Activated T-helper 1 cell treated with anti-CD3 and anti-CD28 coated beads, Interleukin-12 subunit alpha, Interleukin-12 subunit beta, Interleukin-2, Interleukin-4 antibody, amounts not matched to agents 30 ng/mL and 10 ng/mL and 1 ng/mL, durations not matched to agents 14 hours and 24 hours and 36 hours (primary cell): ENCODE measurements at regions of chr14 and their contacts with region 1.

Region 1: DNA sequence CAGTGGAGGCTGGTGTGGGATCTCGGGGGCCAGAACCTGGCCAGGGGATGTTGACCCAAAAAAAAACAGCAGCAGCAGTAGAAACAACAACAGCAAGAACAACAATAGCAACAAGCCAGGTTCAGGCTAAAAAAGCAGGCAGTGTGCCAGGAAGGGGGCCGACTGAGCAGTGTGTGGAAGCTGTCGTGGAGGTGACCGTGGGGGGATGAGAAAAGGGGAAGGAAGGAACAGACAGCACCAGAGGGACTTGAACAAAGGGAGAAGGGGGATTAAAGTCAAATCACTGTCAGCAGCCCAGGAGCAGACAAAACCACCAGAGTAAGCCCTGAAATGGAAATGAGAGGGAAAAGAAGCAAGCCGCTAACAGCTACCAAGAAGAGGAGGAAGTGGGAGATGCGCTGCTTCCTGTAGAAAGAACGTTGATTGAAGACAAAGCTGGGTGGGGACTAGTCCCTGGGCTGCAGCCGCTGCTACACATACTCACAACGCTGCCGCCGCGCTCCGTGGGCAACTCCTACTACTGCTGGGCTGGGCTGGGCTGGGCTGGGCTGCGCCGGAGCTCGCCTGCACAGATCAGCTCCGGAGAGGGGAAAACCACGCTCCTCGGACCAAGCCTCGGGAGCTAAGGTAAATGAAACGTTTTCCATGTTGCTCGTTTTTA is at the start of gene GNG2:
- DNase-seq: peak; percentile 77
- H3K4me3 Mint-ChIP-seq: peak within 1 kb of the TSS; percentile 95
- H3K27ac Mint-ChIP-seq: peak within 1 kb of the TSS; percentile 88
- H3K4me1 Mint-ChIP-seq: peaks cover 63% of the 10 kb centered on the region
- H3K27me3 Mint-ChIP-seq: peaks cover 2% of the 10 kb centered on the region
- total RNA-seq, gene GNG2: 126 and 128 TPM in 2 replicates

Region 2: GRCh38 chr14:51239813-51240803 is 620.2 kb before region 1 on chr14 and contains the start of gene TMX1:
- intact Hi-C with region 1: loop called (anchors 5 kb)
- DNase-seq: peak; percentile 87
- H3K4me3 Mint-ChIP-seq: no peak within 1 kb of the TSS
- H3K27ac Mint-ChIP-seq: no peak within 1 kb of the TSS
- H3K4me1 Mint-ChIP-seq: peaks cover 12% of the 10 kb centered on the region
- H3K27me3 Mint-ChIP-seq: no peaks in the 10 kb centered on the region
- total RNA-seq, gene TMX1: 51.1 and 51.3 TPM in 2 replicates

Region 3: DNA sequence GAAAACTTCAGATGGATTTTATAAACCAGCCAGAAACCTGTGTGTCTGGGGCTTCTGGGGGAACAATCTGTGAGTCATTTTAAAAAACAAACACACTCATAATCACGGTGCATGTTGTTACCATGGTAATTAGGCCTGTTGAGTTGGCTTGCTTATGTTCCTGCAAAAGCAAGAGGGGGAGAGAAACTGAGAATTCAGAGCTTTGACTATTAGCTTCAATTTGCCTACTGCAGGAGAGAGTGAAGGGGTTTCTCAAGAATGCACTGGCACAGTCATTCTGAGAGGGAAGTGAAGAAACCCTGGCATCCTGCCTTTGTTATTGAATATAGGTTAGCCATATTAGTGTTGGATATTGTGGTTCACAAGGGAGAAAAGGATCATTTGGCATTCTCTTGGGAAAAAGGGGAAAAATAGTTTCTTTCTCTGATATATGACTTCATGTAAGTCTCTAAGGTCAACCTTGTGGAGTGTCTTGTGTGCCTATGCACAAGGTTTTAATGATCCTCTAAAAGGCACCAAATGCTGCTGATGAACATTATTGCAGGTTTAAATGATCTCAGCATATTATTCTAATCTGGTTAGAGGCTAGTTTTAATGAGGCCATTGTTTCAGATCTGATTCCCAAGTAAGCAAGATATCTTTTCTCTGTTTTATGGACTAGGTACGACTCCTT is 13.1 kb after region 1 on chr14:
- intact Hi-C with region 1: loop called (anchors 1 kb)
- DNase-seq: peak; percentile 24
- H3K4me3 Mint-ChIP-seq: peak overlapping the region; percentile 59
- H3K27ac Mint-ChIP-seq: peak overlapping the region; percentile 80
- H3K4me1 Mint-ChIP-seq: peaks cover 63% of the 10 kb centered on the region
- H3K27me3 Mint-ChIP-seq: no peaks in the 10 kb centered on the region

Region 4: GRCh38 chr14:51884086-51884927 is 24.0 kb after region 1 on chr14:
- intact Hi-C with region 1: no loop called
- DNase-seq: no peak
- H3K4me3 Mint-ChIP-seq: peak overlapping the region; percentile 67
- H3K27ac Mint-ChIP-seq: peak overlapping the region; percentile 75
- H3K4me1 Mint-ChIP-seq: peaks cover 60% of the 10 kb centered on the region
- H3K27me3 Mint-ChIP-seq: no peaks in the 10 kb centered on the region

Region 5: GRCh38 chr14:51979088-51979709 is 118.9 kb after region 1 on chr14:
- intact Hi-C with region 1: loop called (anchors 1 kb)
- DNase-seq: peak; percentile 70
- H3K4me3 Mint-ChIP-seq: no peak overlapping the region
- H3K27ac Mint-ChIP-seq: no peak overlapping the region
- H3K4me1 Mint-ChIP-seq: peaks cover 22% of the 10 kb centered on the region
- H3K27me3 Mint-ChIP-seq: peaks cover 2% of the 10 kb centered on the region